ENCODE measurements at regions of chr5 and their contacts with region 1.

Region 1: DNA sequence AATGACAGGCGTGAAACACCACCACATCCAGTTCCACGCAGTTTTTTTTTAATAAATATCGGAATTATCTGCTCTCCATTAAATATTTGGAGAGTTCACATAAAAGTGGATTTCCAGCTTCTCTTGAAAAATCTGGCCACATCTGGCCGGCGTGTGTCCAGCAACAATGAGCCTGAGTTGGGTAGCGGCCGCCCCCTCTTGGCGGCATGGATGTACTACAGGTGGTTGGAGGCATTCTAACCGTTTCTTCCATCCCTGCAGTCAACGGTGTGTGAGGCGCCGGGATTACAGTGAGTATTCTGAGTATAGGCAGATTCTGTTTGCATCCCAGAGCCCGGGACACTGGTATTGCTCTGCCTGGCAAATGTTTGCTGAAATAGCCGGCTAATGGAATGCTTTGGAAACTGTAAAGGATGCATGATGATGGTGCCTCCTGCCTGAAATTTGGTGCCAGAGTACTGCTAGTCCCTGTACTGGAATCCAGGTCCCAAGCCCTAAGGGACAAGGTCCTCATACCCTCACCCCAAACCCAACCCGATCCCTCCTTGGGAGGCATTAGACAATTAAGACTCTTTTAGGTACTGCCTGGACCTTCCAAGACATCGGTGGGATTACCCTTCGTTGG is 13.6 kb upstream of the GM2A start:
- DNase-seq: peak; percentile 58
- ATAC-seq: peak; percentile 60
- H3K4me3 Mint-ChIP-seq: peak overlapping the region; percentile 77
- H3K27ac Mint-ChIP-seq: peak overlapping the region; percentile 72
- H3K4me1 Mint-ChIP-seq: peaks cover 95% of the 10 kb centered on the region
- H3K27me3 Mint-ChIP-seq: no peaks in the 10 kb centered on the region
- CTCF ChIP-seq: peak; percentile 85

Region 2: GRCh38 chr5:149803641-149804468 is 1435.5 kb before region 1 on chr5:
- CTCF ChIA-PET with region 1: no interaction called
- POLR2A ChIA-PET with region 1: no interaction called
- intact Hi-C with region 1: no loop called
- DNase-seq: no peak
- ATAC-seq: no peak
- H3K4me3 Mint-ChIP-seq: no peak overlapping the region
- H3K27ac Mint-ChIP-seq: no peak overlapping the region
- H3K4me1 Mint-ChIP-seq: peaks cover 13% of the 10 kb centered on the region
- H3K27me3 Mint-ChIP-seq: no peaks in the 10 kb centered on the region
- CTCF ChIP-seq: no peak

Region 3: GRCh38 chr5:150801117-150801927 is 438.0 kb before region 1 on chr5:
- CTCF ChIA-PET with region 1: interaction called, 6 read pairs
- POLR2A ChIA-PET with region 1: interaction called, 3 read pairs
- intact Hi-C with region 1: loop called (anchors 2 kb)
- DNase-seq: no peak
- ATAC-seq: no peak
- H3K4me3 Mint-ChIP-seq: no peak overlapping the region
- H3K27ac Mint-ChIP-seq: no peak overlapping the region
- H3K4me1 Mint-ChIP-seq: no peaks in the 10 kb centered on the region
- H3K27me3 Mint-ChIP-seq: peaks cover 18% of the 10 kb centered on the region
- CTCF ChIP-seq: no peak

Region 4: DNA sequence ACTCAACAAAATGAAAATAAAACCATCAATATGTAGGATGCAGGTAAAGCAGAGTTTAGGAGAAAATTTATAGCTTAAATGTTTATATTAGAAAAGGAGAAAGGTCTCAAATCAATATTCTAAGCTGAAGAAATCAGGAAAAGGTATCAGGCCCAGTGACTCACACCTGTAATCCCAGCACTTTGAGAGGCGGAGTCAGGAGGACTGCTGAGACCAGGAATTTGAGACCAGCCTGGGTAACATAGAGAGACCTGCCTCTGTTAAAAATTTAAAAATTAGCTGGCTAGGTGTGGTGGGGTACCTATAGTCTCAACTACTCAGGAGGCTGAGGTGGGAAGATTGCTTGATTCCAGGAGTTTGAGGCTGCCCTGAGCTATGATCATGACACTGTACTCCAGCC is 47.7 kb before region 1 on chr5:
- CTCF ChIA-PET with region 1: interaction called, 10 read pairs
- POLR2A ChIA-PET with region 1: interaction called, 7 read pairs
- intact Hi-C with region 1: loop called (anchors 1 kb)
- DNase-seq: no peak
- ATAC-seq: no peak
- H3K4me3 Mint-ChIP-seq: peak overlapping the region; percentile 46
- H3K27ac Mint-ChIP-seq: peak overlapping the region; percentile 76
- H3K4me1 Mint-ChIP-seq: peaks cover 80% of the 10 kb centered on the region
- H3K27me3 Mint-ChIP-seq: no peaks in the 10 kb centered on the region
- CTCF ChIP-seq: no peak

Region 5: DNA sequence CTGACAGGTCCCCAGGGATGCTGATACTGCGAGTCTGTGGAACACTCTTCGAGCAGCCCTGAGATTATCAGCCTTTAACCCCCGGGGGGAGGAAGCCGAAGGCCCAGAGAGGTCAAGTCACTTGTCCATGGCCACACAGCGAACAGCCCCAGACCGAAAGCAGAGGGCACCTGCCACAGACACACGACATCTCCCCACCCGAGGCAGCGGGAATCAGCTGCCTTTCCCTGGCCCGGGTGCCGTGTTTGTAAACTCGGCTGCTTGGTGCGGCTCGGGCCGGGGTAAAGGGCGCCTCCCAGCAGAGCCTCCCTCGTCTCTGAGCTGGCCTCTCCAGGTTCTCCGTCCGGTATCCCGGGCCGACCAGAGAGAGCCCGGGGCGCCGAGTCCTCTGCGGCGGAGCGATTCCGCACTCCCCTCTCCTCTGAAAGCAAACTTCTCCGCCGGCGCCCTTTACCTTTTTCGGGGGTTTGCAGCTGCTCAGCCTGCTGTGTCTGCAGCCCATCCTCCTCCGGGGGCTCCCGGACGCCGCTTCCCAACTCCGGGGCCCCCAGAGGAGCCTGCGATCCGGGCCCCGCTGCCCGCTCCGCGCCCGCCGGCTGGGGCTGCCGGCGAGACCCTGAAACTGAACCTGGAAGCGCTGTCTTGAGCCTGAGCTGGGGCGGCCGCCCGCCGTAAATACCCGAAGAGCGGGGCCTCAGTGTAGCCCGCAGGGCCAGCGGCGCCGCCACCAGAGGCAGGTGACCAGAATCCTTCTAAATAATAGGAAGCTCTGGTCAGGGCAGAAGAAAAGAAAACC is 15.7 kb before region 1 on chr5 and contains the start of gene CCDC69:
- CTCF ChIA-PET with region 1: interaction called, 24 read pairs
- POLR2A ChIA-PET with region 1: interaction called, 57 read pairs
- intact Hi-C with region 1: loop called (anchors 1 kb)
- DNase-seq: peak; percentile 56
- ATAC-seq: peak; percentile 51
- H3K4me3 Mint-ChIP-seq: peak within 1 kb of the TSS; percentile 91
- H3K27ac Mint-ChIP-seq: peak within 1 kb of the TSS; percentile 93
- H3K4me1 Mint-ChIP-seq: peaks cover 73% of the 10 kb centered on the region
- H3K27me3 Mint-ChIP-seq: no peaks in the 10 kb centered on the region
- CTCF ChIP-seq: no peak
- total RNA-seq, gene CCDC69: 98.9 and 109 TPM in 2 replicates

Region 6: DNA sequence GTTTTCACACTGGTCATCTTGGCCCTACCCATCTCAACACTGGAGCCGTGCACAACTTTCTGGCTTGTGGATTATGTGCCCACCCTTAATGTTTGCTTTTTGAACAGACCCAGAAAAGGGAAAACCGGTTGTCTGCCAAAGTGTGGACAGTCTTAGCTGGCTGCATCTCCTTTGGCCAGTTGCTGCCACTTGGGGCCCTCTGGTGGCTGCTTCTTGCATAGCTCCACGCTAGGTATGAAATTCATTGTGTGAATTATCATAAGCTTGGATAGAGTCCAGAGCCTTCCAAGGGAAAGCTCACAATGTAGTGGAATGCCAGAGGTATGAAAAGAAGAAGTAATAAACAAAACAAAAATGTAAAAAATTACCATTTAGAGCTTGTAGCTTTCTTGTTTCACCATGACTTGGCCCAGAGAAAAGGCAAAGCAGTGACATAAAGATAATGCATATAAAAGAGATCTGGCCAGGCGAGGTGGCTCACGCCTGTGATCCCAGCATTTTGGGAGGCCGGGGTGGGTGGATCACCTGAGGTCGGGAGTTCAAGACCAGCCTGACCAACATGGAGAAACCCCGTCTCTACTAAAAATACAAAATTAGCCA is 76.7 kb after region 1 on chr5:
- CTCF ChIA-PET with region 1: interaction called, 16 read pairs
- POLR2A ChIA-PET with region 1: no interaction called
- intact Hi-C with region 1: loop called (anchors 1 kb)
- DNase-seq: peak; percentile 40
- ATAC-seq: peak; percentile 83
- H3K4me3 Mint-ChIP-seq: no peak overlapping the region
- H3K27ac Mint-ChIP-seq: no peak overlapping the region
- H3K4me1 Mint-ChIP-seq: peaks cover 11% of the 10 kb centered on the region
- H3K27me3 Mint-ChIP-seq: peaks cover 5% of the 10 kb centered on the region
- CTCF ChIP-seq: peak; percentile 64

Measured in activated B cell treated with CpG ODN at 0.5 μM for 24 hours (primary cell).